ENCODE measurements at regions of chr10 and their contacts with region 1.

Region 1: GRCh38 chr10:3811291-3811870 is 26.4 kb upstream of the KLF6 start:
- DNase-seq: peak; percentile 68
- ATAC-seq: peak; percentile 52
- H3K4me3 Mint-ChIP-seq: peak overlapping the region; percentile 71
- H3K27ac Mint-ChIP-seq: peak overlapping the region; percentile 91
- H3K4me1 Mint-ChIP-seq: peaks cover 85% of the 10 kb centered on the region
- H3K27me3 Mint-ChIP-seq: no peaks in the 10 kb centered on the region

Region 2: DNA sequence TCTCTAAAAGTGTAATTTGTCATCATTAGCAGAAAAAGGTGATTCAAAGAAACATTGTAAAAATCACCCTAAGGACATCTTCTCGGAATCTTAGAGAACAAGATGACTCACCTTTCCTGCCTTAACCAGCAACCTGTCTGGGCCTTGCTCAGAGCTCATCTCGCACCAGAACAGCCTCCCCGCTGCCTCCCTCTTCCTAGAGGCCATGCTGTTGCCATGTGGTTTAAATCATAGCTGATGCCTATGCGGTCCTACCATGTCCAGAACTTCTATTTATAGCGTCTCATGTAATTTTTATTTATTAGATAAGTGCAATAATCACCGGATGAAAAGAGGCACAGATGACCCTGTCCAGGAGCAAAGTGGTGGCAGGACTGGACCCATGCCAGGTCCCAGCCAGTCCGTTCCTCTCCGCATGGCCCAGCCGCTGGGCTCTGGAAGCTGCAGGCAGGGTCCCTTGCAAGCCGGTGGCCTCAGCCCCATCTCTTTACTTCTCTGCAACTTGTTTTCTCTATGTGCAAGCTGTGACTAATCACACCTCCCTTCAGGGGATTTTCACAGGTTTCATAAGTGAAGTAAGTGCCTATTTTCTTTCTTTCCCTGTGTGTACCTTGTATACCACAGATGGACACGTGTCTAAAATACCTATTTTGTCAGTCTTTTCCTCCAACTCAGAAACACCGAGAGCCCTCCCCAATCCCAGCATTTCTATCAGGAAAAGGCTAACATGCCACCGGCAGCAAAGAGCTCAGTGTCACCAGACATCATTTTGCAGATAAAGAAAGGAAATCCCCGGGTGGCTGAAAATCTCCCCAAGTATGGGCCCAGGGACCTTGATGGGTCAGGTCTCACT is 53.5 kb before region 1 on chr10:
- CTCF ChIA-PET with region 1: no interaction called
- POLR2A ChIA-PET with region 1: interaction called, 23 read pairs
- DNase-seq: peak; percentile 72
- ATAC-seq: peak; percentile 90
- H3K4me3 Mint-ChIP-seq: peak overlapping the region; percentile 34
- H3K27ac Mint-ChIP-seq: peak overlapping the region; percentile 91
- H3K4me1 Mint-ChIP-seq: peaks cover 71% of the 10 kb centered on the region
- H3K27me3 Mint-ChIP-seq: no peaks in the 10 kb centered on the region

Region 3: GRCh38 chr10:3828404-3829155 is 17.2 kb after region 1 on chr10:
- CTCF ChIA-PET with region 1: interaction called, 8 read pairs
- POLR2A ChIA-PET with region 1: interaction called, 12 read pairs
- DNase-seq: no peak
- ATAC-seq: peak; percentile 56
- H3K4me3 Mint-ChIP-seq: peak overlapping the region; percentile 59
- H3K27ac Mint-ChIP-seq: peak overlapping the region; percentile 91
- H3K4me1 Mint-ChIP-seq: peaks cover 45% of the 10 kb centered on the region
- H3K27me3 Mint-ChIP-seq: no peaks in the 10 kb centered on the region

Region 4: DNA sequence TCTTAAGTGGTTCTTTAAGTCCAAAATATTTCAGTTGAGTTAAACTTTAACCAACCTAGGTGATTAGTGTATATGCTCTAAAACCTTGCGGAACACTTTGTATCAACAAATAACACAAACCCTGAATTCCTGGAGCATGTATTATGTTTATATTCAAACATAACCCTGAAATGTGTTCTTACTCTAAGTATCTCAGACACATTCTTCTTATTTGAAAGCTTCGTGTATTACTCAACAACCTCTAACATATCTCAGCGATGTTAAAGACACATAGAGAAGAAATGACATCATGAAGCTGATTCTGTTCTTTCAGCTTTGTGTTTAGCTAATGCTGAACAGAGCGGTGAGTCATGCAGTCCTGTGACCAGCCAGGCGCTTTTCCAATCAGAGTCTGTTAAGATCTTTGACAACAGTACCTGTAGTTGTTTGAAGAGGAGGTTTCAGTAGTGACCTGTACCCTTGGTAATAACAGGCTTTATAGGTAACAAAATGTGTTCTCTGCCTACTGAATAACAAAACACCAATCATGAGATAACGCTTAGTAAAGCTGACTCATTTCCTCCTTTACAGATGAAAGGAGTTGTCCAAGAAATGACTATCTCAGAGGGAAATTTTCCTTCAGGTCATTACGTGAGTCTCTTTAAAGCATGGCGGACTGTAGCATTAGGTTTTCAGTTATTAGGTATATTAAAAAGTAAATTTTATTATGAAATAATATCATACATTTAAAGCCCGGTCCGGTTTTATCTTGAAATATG is 40.9 kb after region 1 on chr10:
- CTCF ChIA-PET with region 1: interaction called, 6 read pairs
- POLR2A ChIA-PET with region 1: interaction called, 25 read pairs
- DNase-seq: peak; percentile 68
- ATAC-seq: peak; percentile 98
- H3K4me3 Mint-ChIP-seq: no peak overlapping the region
- H3K27ac Mint-ChIP-seq: peak overlapping the region; percentile 54
- H3K4me1 Mint-ChIP-seq: peaks cover 29% of the 10 kb centered on the region
- H3K27me3 Mint-ChIP-seq: no peaks in the 10 kb centered on the region

Region 5: DNA sequence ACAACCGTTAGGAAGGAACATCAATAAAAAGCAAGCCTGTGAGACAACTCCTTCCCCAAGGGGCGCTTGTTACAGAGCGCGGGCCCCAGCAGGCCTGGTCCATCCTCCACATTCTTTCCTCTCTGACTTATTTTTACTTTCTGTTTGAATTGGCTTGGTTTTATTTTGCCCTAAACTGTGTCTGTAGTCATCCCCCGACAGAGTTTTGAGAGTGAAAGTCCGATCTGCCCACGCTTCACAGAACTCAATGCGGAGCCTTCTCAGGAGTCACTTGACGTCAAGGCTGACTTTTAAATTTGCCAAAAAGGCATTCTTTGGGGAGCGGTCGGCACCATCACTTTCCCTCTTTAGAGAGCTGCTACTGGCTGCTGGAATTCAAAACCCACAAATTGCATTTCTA is 123.8 kb after region 1 on chr10:
- CTCF ChIA-PET with region 1: no interaction called
- POLR2A ChIA-PET with region 1: interaction called, 10 read pairs
- DNase-seq: peak; percentile 72
- ATAC-seq: peak; percentile 93
- H3K4me3 Mint-ChIP-seq: peak overlapping the region; percentile 51
- H3K27ac Mint-ChIP-seq: peak overlapping the region; percentile 89
- H3K4me1 Mint-ChIP-seq: peaks cover 61% of the 10 kb centered on the region
- H3K27me3 Mint-ChIP-seq: no peaks in the 10 kb centered on the region

Region 6: DNA sequence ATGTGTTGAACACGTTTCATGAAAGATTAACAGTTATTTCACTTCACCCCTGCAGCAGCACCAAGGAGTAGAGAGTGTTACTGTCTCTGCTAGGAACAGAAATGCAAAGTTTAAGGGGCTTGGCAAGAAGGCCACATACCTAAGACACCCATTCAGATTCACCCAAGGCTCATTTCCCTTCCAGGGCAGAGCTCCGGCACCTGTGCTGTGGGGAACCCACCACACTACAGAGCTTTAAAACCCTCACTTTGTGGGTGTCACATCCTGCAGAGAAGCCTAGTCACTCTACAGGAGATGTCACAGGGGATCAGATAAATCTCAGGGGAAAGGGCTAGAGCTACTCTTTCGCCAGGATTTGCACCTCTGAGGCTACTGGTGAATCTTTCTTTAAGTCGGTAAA is 149.7 kb after region 1 on chr10:
- CTCF ChIA-PET with region 1: interaction called, 3 read pairs
- POLR2A ChIA-PET with region 1: interaction called, 20 read pairs
- DNase-seq: peak; percentile 89
- ATAC-seq: peak; percentile 98
- H3K4me3 Mint-ChIP-seq: peak overlapping the region; percentile 87
- H3K27ac Mint-ChIP-seq: peak overlapping the region; percentile 96
- H3K4me1 Mint-ChIP-seq: peaks cover 86% of the 10 kb centered on the region
- H3K27me3 Mint-ChIP-seq: no peaks in the 10 kb centered on the region

Region 7: GRCh38 chr10:3972460-3973301 is 161.3 kb after region 1 on chr10:
- CTCF ChIA-PET with region 1: no interaction called
- POLR2A ChIA-PET with region 1: interaction called, 24 read pairs
- DNase-seq: peak; percentile 63
- ATAC-seq: peak; percentile 88
- H3K4me3 Mint-ChIP-seq: peak overlapping the region; percentile 76
- H3K27ac Mint-ChIP-seq: peak overlapping the region; percentile 99
- H3K4me1 Mint-ChIP-seq: peaks cover 61% of the 10 kb centered on the region
- H3K27me3 Mint-ChIP-seq: no peaks in the 10 kb centered on the region

Measured in activated CD8-positive, alpha-beta T cell treated with anti-CD3 and anti-CD28 coated beads, Interleukin-2, amount 10 ng/mL, durations not matched to agents 7 days and 5 days (primary cell).